Activated naive CD4-positive, alpha-beta T cell treated with anti-CD3 and anti-CD28 coated beads for 36 hours (primary cell): ENCODE measurements at regions of chr19 and their contacts with region 1.

Region 1: DNA sequence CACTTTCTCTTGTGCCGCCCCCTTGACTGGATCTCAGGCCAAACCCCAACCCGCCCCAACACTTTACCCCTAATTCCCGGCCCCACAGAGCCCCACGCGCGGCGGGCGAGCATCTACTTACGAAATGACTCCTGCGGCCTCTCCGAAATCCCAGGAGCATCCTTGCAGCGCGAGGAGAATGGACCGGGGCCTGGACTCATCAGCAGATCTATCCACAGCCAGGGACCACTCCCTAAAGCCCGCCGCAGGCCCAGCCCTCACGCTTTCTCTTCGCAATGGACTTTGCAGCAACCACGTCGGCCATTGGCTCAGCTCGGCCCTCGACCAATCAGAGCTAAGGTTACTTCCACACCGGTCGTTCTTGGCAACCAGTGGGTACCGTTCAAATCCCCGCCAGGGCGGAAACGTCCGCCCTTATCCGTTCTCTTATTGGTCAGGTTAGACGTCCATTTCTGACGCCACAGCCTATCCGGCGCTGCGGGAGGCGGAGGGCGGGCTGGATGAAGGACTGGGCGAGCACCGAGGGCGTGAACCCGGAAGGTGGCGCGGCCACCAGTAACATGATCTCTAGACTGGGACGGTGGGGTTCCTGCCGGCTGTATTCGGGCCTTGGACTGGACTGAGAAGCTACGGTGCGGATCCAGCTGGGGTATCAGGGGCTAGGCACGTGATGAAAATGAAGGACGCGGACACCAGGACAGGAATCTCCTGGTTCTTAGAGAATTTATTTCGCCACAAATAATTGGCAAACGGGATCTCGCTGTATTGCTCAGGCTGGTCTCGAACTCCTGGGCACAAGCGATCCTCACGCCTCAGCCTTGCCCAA is at the starts of genes CEP89 and FAAP24:
- DNase-seq: peak; percentile 99
- H3K4me3 Mint-ChIP-seq: peak within 1 kb of the TSS; percentile 97
- H3K27ac Mint-ChIP-seq: peak within 1 kb of the TSS; percentile 90
- H3K4me1 Mint-ChIP-seq: peaks cover 9% of the 10 kb centered on the region
- H3K27me3 Mint-ChIP-seq: no peaks in the 10 kb centered on the region
- total RNA-seq, gene CEP89: 14.6 to 15.5 TPM
- total RNA-seq, gene FAAP24: 9.6 to 10.5 TPM

Region 2: GRCh38 chr19:32405431-32406161 is 566.3 kb before region 1 on chr19 and contains the start of gene DPY19L3:
- CTCF ChIA-PET with region 1: no interaction called
- intact Hi-C with region 1: loop called (anchors 2 kb)
- DNase-seq: peak; percentile 93
- H3K4me3 Mint-ChIP-seq: peak within 1 kb of the TSS; percentile 88
- H3K27ac Mint-ChIP-seq: peak within 1 kb of the TSS; percentile 90
- H3K4me1 Mint-ChIP-seq: peaks cover 19% of the 10 kb centered on the region
- H3K27me3 Mint-ChIP-seq: no peaks in the 10 kb centered on the region
- total RNA-seq, gene DPY19L3: 11.1 to 11.5 TPM

Region 3: GRCh38 chr19:32928806-32929205 is 43.1 kb before region 1 on chr19:
- CTCF ChIA-PET with region 1: no interaction called
- intact Hi-C with region 1: no loop called
- DNase-seq: no peak
- H3K4me3 Mint-ChIP-seq: no peak overlapping the region
- H3K27ac Mint-ChIP-seq: no peak overlapping the region
- H3K4me1 Mint-ChIP-seq: no peaks in the 10 kb centered on the region
- H3K27me3 Mint-ChIP-seq: no peaks in the 10 kb centered on the region

Region 4: GRCh38 chr19:32988724-32989123 is 16.8 kb after region 1 on chr19:
- CTCF ChIA-PET with region 1: no interaction called
- intact Hi-C with region 1: no loop called
- DNase-seq: no peak
- H3K4me3 Mint-ChIP-seq: no peak overlapping the region
- H3K27ac Mint-ChIP-seq: no peak overlapping the region
- H3K4me1 Mint-ChIP-seq: peaks cover 4% of the 10 kb centered on the region
- H3K27me3 Mint-ChIP-seq: no peaks in the 10 kb centered on the region

Region 5: GRCh38 chr19:33080761-33081681 is 109.1 kb after region 1 on chr19 and contains the start of gene GPATCH1:
- CTCF ChIA-PET with region 1: interaction called, 3 read pairs
- intact Hi-C with region 1: loop called (anchors 1 kb)
- DNase-seq: peak; percentile 89
- H3K4me3 Mint-ChIP-seq: peak within 1 kb of the TSS; percentile 99
- H3K27ac Mint-ChIP-seq: peak within 1 kb of the TSS; percentile 88
- H3K4me1 Mint-ChIP-seq: peaks cover 25% of the 10 kb centered on the region
- H3K27me3 Mint-ChIP-seq: no peaks in the 10 kb centered on the region
- total RNA-seq, gene GPATCH1: 8.3 to 9.1 TPM

Region 6: DNA sequence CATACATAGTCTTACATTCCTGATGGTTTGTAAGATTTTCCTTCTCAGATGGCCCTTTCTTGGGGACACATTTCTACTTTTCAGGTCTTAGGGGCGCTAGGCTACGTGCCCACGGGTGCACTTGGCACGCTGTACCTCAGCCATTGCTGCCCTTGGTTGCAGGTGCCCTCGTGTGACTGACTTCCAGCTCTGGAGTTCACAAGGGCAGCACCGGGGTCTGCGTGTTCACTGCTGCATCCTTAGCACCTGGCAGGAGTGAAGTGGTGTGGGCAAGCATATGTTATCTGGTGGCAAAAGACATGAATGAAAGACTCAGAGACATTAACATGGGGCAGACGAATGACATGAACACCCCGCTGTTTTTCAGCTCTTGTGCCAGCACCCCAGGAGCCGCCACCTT is 146.7 kb after region 1 on chr19:
- CTCF ChIA-PET with region 1: interaction called, 6 read pairs
- intact Hi-C with region 1: loop called (anchors 1 kb)
- DNase-seq: no peak
- H3K4me3 Mint-ChIP-seq: no peak overlapping the region
- H3K27ac Mint-ChIP-seq: no peak overlapping the region
- H3K4me1 Mint-ChIP-seq: no peaks in the 10 kb centered on the region
- H3K27me3 Mint-ChIP-seq: no peaks in the 10 kb centered on the region